Colonic mucosa (tissue), 4 donors: ENCODE measurements at regions of chr15 and their contacts with region 1.

Region 1: GRCh38 chr15:50003786-50004334 is 115.2 kb downstream of the ATP8B4 start:
- DNase-seq: peak; percentile 89
- H3K4me3 ChIP-seq: no peak overlapping the region
- H3K27ac ChIP-seq: peak overlapping the region; percentile 24
- H3K4me1 ChIP-seq: no peaks in the 10 kb centered on the region
- H3K27me3 ChIP-seq: no peaks in the 10 kb centered on the region
- CTCF ChIP-seq: peak; percentile 77

Region 2: GRCh38 chr15:49235446-49236124 is 768.3 kb before region 1 on chr15:
- intact Hi-C with region 1: loop called (anchors 10 kb)
- DNase-seq: peak; percentile 51
- H3K4me3 ChIP-seq: no peak overlapping the region
- H3K27ac ChIP-seq: no peak overlapping the region
- H3K4me1 ChIP-seq: no peaks in the 10 kb centered on the region
- H3K27me3 ChIP-seq: no peaks in the 10 kb centered on the region
- CTCF ChIP-seq: peak; percentile 57

Region 3: DNA sequence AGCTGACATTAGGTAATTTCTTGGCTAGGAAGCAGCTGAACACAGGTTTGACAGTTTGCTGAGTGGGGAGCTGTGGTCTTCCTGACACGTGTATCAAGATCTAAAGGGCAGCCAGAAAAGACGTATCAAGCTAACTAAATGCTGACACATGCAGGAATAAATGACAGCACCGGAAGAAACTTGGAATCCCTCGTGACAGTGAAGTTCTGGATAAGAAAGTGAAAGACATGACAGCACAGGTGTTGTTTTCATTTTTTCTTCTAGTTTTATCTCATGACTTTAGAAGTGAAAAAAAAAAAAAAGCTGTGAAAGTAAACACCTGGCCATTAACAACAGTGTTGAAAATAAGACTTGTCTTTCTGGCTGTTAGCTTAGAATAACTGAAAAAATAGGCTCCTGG is 532.1 kb before region 1 on chr15:
- intact Hi-C with region 1: loop called (anchors 5 kb)
- DNase-seq: no peak
- H3K4me3 ChIP-seq: no peak overlapping the region
- H3K27ac ChIP-seq: no peak overlapping the region
- H3K4me1 ChIP-seq: no peaks in the 10 kb centered on the region
- H3K27me3 ChIP-seq: no peaks in the 10 kb centered on the region
- CTCF ChIP-seq: no peak

Region 4: DNA sequence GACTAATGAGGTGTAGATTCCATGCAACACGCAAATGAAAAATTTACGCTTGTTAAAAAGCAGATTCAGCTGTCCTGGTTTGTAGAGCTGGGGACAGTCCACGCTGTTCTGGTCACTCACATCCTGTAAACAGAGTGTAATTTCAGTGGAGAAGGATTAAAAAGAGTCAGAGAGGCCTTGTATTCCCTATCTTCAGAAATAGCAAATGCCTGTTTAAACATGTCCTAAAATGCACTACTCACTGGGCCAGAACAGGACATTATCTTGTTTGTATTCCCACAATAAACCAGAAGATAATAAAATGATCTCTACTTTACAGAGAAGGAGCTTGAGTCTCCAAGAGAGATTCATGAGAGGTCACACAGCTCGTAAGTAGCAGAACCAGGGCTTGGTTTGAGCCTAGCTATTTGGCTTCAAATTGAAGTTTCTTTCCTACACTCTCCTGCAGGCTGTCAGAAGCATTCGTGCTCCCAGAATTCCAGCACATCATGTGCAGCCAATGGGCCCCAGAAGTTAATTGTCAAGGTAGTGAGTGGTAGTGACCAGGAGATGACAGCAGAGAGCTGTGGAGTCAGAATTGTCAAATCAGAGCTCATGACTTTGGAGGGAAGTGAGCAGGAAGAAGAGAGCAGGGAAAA is 127.3 kb before region 1 on chr15:
- intact Hi-C with region 1: loop called (anchors 5 kb)
- DNase-seq: no peak
- H3K4me3 ChIP-seq: no peak overlapping the region
- H3K27ac ChIP-seq: peak overlapping the region; percentile 58
- H3K4me1 ChIP-seq: peaks cover 6% of the 10 kb centered on the region
- H3K27me3 ChIP-seq: no peaks in the 10 kb centered on the region
- CTCF ChIP-seq: peak; percentile 32